ENCODE measurements at regions of chr19 and their contacts with region 1.

Region 1: DNA sequence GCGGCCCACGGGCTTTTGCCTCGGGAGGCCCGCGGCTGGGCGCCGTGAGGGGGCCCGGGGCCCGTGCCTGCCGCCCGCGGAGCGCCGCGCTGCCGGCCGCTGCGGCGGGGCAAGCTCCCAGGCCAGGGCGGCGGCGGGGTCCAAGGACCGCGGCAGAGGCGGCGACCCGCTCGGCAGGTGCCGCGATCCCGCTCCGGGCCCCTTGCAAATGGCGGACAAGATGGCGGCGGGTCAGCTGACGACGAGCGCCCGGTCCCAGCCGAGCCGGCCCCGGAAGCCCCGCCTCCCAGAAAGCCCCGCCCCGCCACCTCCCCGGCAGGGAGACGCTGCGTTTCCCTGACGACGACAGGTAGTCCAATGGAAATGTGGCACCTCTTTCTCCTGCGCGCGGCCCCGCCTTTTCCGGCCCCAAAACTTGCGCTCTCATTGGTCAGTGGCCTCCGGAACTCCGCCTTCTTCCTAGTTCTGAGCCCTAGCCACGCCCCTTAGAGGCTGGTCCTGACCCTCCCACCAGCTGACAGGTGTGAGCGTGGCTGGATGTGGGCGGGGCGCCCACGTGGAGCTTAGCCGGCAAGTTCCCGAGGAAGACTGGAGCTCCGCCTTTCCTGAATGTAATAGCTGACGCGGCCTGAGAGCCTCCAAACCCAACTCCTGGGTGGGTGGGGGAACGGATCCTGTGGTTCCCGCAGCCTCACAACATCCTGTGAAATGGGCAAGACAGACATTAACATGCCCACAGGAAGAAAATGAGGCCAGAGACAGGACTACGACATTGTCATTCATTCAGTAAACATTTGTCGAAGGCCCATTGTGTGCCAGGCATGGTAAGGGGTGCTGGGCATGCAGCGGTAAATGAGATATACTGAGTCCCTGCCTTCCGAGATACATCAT is at the start of gene AP3D1:
- DNase-seq: peak; percentile 99
- ATAC-seq: peak; percentile 92
- H3K4me3 Mint-ChIP-seq: peak within 1 kb of the TSS; percentile 83
- H3K27ac Mint-ChIP-seq: peak within 1 kb of the TSS; percentile 70
- H3K4me1 Mint-ChIP-seq: peaks cover 41% of the 10 kb centered on the region
- H3K27me3 Mint-ChIP-seq: no peaks in the 10 kb centered on the region
- CTCF ChIP-seq: no peak
- total RNA-seq, gene AP3D1: 97.2 and 109 TPM in 2 replicates

Region 2: GRCh38 chr19:1863726-1864480 is 287.7 kb before region 1 on chr19:
- CTCF ChIA-PET with region 1: no interaction called
- POLR2A ChIA-PET with region 1: no interaction called
- intact Hi-C with region 1: loop called (anchors 1 kb)
- DNase-seq: peak; percentile 92
- ATAC-seq: peak; percentile 68
- H3K4me3 Mint-ChIP-seq: peak overlapping the region; percentile 87
- H3K27ac Mint-ChIP-seq: peak overlapping the region; percentile 92
- H3K4me1 Mint-ChIP-seq: peaks cover 36% of the 10 kb centered on the region
- H3K27me3 Mint-ChIP-seq: no peaks in the 10 kb centered on the region
- CTCF ChIP-seq: no peak

Region 3: DNA sequence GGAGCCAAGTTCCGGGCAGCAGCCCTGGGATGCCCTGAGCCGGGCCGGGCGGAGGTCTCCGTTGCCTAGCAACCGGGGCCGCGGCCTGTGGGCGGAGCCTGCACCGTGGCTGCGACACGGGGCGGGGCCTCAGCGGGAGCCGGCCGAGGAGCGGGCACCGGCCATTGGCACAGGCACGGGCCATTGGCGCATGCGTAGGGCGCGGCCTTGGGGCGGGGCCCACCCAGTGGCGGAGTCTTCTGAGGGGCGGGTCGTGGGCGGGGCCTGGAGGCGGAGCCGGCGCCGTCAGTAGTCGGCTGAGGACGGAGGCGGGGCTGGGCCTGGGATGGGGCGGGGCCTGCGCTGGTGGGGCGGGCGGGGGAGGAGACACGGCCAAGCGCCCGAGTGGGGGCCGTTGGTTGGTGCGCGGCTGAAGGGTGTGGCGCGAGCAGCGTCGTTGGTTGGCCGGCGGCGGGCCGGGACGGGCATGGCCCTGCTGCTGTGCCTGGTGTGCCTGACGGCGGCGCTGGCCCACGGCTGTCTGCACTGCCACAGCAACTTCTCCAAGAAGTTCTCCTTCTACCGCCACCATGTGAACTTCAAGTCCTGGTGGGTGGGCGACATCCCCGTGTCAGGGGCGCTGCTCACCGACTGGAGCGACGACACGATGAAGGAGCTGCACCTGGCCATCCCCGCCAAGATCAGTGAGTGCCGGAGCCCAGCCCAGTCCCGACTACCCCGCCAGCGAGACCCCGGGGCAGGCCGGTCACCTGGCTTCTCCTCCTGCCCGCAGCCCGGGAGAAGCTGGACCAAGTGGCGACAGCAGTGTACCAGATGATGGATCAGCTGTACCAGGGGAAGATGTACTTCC is 54.9 kb before region 1 on chr19 and contains the start of gene IZUMO4:
- CTCF ChIA-PET with region 1: interaction called, 3 read pairs
- POLR2A ChIA-PET with region 1: interaction called, 5 read pairs
- intact Hi-C with region 1: loop called (anchors 1 kb)
- DNase-seq: peak; percentile 99
- ATAC-seq: peak; percentile 76
- H3K4me3 Mint-ChIP-seq: peak within 1 kb of the TSS; percentile 93
- H3K27ac Mint-ChIP-seq: peak within 1 kb of the TSS; percentile 95
- H3K4me1 Mint-ChIP-seq: peaks cover 38% of the 10 kb centered on the region
- H3K27me3 Mint-ChIP-seq: no peaks in the 10 kb centered on the region
- CTCF ChIP-seq: no peak
- total RNA-seq, gene IZUMO4: 73.0 and 78.6 TPM in 2 replicates

Region 4: GRCh38 chr19:2138061-2138728 is 13.4 kb before region 1 on chr19:
- CTCF ChIA-PET with region 1: no interaction called
- POLR2A ChIA-PET with region 1: no interaction called
- intact Hi-C with region 1: no loop called
- DNase-seq: no peak
- ATAC-seq: no peak
- H3K4me3 Mint-ChIP-seq: no peak overlapping the region
- H3K27ac Mint-ChIP-seq: no peak overlapping the region
- H3K4me1 Mint-ChIP-seq: peaks cover 4% of the 10 kb centered on the region
- H3K27me3 Mint-ChIP-seq: no peaks in the 10 kb centered on the region
- CTCF ChIP-seq: no peak

Region 5: DNA sequence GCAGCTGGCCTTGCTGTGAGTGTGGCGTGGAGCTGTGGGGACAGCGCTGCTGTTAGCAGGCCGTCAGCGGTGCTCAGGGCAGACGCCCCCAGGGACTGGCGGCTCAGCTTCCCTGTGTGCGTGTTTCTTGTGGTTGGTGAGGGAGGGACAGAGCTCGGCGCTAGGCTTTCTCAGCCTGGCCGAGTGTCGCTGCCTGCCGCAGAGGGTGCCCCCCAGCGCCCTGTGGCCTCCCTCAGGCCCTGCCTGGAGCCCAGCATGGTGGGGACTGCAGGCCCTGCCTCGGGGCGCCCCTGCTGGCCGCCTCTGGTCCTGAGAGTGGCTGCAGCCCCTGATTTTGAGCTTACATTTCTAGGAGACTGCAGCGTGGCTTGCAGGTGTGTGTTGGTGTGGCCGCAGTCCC is 47.6 kb after region 1 on chr19:
- CTCF ChIA-PET with region 1: interaction called, 5 read pairs
- POLR2A ChIA-PET with region 1: no interaction called
- intact Hi-C with region 1: loop called (anchors 5 kb)
- DNase-seq: no peak
- ATAC-seq: peak; percentile 52
- H3K4me3 Mint-ChIP-seq: no peak overlapping the region
- H3K27ac Mint-ChIP-seq: no peak overlapping the region
- H3K4me1 Mint-ChIP-seq: peaks cover 8% of the 10 kb centered on the region
- H3K27me3 Mint-ChIP-seq: no peaks in the 10 kb centered on the region
- CTCF ChIP-seq: no peak

Region 6: DNA sequence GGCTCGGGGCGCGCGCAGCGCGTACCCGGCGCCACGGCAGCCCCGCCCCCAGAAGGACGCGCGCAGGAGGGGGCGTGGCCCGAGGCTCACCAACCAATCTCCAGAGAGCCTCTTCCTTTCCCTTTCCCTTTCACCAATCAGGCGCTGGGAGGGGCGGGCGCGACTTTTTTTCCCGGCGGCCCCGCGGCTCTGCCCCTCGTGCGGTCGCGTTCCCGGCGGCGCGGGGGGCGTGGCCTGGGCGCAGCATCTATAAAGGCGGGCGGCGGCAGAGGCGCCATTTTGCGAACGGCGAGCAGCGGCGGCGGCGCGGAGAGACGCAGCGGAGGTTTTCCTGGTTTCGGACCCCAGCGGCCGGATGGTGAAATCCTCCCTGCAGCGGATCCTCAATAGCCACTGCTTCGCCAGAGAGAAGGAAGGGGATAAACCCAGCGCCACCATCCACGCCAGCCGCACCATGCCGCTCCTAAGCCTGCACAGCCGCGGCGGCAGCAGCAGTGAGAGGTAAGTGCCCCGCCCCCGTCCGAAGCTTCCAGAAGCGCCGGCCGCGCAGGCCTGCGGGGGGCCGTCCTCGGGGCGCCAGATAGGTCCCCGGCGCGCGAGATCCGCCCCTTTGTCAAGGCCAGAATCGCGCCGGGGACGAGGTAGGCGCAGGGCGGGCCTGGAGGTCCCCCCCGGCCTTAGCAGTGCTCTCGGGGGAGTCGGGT is 117.8 kb after region 1 on chr19:
- CTCF ChIA-PET with region 1: interaction called, 5 read pairs
- POLR2A ChIA-PET with region 1: interaction called, 7 read pairs
- intact Hi-C with region 1: loop called (anchors 1 kb)
- DNase-seq: peak; percentile 100
- ATAC-seq: peak; percentile 67
- H3K4me3 Mint-ChIP-seq: peak overlapping the region; percentile 92
- H3K27ac Mint-ChIP-seq: peak overlapping the region; percentile 91
- H3K4me1 Mint-ChIP-seq: peaks cover 60% of the 10 kb centered on the region
- H3K27me3 Mint-ChIP-seq: no peaks in the 10 kb centered on the region
- CTCF ChIP-seq: no peak

Region 7: DNA sequence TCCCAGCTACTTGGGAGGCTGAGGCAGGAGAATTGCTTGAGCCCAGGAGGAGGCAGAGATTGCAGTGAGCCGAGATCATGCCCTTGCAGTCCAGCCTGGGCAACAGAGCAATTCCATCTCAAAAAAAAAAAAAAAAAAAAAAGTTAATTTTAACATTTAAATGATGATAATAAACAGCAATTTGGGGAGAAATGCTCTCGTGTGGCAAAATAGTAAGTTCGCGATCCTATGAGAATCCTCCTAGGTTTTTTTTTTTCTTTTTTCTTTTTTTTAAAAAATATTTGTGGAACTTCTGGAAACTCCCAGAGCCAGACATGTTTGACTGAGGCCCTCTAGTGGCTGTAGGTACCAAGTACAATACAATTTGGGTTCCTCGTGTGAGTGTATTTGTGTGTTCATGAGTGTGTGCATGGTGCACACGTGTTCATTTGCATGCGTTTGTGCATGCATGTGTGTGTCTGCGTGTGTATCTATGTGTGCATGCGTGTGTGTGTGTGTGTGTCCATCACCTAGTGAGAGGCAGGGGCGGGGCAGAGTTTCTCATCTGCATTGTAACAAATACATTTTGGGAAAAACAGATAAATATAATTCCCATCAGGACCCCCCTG is 239.6 kb after region 1 on chr19:
- CTCF ChIA-PET with region 1: interaction called, 3 read pairs
- POLR2A ChIA-PET with region 1: no interaction called
- intact Hi-C with region 1: loop called (anchors 1 kb)
- DNase-seq: no peak
- ATAC-seq: peak; percentile 56
- H3K4me3 Mint-ChIP-seq: no peak overlapping the region
- H3K27ac Mint-ChIP-seq: peak overlapping the region; percentile 74
- H3K4me1 Mint-ChIP-seq: peaks cover 34% of the 10 kb centered on the region
- H3K27me3 Mint-ChIP-seq: no peaks in the 10 kb centered on the region
- CTCF ChIP-seq: peak; percentile 82

Measured in activated B cell treated with CpG ODN at 0.5 μM for 24 hours (primary cell).